GM10248 (cell line): ENCODE measurements at regions of chr9 and their contacts with region 1.

Region 1: DNA sequence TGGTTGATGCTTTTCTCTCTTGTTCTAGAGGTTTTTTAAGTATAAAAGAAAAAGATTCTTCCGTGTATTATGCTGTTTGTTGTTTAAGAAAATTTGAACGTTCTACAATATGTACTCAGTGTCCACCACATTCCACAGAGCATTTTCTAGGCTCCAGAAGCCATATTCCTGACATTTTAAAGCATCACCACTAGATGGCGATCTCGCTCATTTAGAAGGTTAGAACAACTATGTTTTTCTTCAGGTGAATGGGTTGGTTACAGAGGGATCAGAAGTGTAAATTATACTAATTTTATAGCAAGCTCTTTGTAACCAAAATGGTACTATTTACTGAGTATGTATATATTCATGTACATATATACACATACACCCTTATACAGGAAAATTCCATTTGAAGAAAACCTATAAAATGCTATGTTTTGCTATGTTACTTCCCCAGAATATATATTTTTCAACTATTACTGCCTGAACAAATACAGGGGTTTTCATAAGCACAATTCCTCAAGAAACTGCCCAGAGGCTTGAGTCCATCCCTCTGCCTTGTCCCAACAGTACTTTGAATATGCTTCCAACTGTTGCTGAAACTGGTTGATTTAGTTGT is 284.3 kb downstream of the CCDC171 start:
- DNase-seq: peak; percentile 38
- CTCF ChIP-seq: peak; percentile 73

Region 2: GRCh38 chr9:15786616-15787015 is 50.6 kb before region 1 on chr9:
- CTCF ChIA-PET with region 1: no interaction called
- POLR2A ChIA-PET with region 1: no interaction called
- DNase-seq: no peak
- CTCF ChIP-seq: no peak

Region 3: GRCh38 chr9:15824310-15824709 is 12.9 kb before region 1 on chr9:
- CTCF ChIA-PET with region 1: interaction called, 17 read pairs
- POLR2A ChIA-PET with region 1: no interaction called
- DNase-seq: no peak
- CTCF ChIP-seq: no peak